ENCODE measurements at regions of chr1 and their contacts with region 1.

Region 1: DNA sequence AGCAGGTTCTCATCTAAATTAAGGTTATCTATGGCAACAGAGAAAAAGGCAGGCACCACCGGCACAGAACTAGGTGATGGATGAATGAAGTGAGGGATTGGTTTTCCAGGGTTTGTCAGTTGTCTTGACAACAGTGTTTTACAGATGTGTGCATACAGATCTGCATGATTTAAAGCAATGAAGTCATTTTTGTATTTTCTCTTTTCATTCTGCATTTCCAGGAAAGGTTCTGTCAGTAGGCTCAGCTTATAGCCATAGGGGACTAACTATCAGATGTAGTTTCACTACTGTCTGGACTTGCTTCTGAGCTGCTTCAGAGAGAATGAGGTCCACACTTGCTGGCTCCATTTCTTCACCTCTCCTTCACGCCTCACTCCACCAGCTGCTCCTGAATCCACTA is 98.2 kb upstream of the LMO4 start:
- DNase-seq: no peak
- H3K4me3 Mint-ChIP-seq: no peak overlapping the region
- H3K27ac Mint-ChIP-seq: no peak overlapping the region
- H3K4me1 Mint-ChIP-seq: no peaks in the 10 kb centered on the region
- H3K27me3 Mint-ChIP-seq: peaks cover 5% of the 10 kb centered on the region

Region 2: DNA sequence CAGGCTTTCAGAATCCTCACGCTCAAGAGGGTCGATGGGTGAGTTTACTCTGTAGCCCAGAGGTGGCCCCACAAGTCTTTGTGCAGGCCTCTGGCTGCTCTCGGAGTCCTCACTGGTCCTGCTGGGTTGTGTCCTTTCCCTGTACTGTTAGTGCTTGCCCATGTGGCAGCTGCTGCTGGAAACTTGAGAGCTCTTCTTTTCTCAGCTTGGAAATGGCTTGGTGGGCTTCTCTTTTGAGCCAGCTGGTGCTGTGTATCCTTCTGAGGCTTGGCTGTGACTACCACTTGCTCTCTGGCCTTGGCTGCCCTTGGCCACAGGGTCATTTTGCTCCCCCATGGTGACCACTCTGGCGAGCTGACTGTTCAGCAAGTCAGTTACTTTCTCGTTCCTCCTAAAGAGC is 15.9 kb after region 1 on chr1:
- intact Hi-C with region 1: loop called (anchors 1 kb)
- DNase-seq: no peak
- H3K4me3 Mint-ChIP-seq: no peak overlapping the region
- H3K27ac Mint-ChIP-seq: no peak overlapping the region
- H3K4me1 Mint-ChIP-seq: no peaks in the 10 kb centered on the region
- H3K27me3 Mint-ChIP-seq: peaks cover 12% of the 10 kb centered on the region

Measured in activated T-helper 2 cell treated with anti-CD3 and anti-CD28 coated beads, Interferon-gamma antibody, Interleukin-2, Interleukin-4, amounts not matched to agents 10 μg/mL and 5 μg/mL and 100 μg/mL, durations not matched to agents 14 hours and 24 hours and 36 hours (primary cell).